ENCODE measurements at regions of chr1 and their contacts with region 1.

Region 1: DNA sequence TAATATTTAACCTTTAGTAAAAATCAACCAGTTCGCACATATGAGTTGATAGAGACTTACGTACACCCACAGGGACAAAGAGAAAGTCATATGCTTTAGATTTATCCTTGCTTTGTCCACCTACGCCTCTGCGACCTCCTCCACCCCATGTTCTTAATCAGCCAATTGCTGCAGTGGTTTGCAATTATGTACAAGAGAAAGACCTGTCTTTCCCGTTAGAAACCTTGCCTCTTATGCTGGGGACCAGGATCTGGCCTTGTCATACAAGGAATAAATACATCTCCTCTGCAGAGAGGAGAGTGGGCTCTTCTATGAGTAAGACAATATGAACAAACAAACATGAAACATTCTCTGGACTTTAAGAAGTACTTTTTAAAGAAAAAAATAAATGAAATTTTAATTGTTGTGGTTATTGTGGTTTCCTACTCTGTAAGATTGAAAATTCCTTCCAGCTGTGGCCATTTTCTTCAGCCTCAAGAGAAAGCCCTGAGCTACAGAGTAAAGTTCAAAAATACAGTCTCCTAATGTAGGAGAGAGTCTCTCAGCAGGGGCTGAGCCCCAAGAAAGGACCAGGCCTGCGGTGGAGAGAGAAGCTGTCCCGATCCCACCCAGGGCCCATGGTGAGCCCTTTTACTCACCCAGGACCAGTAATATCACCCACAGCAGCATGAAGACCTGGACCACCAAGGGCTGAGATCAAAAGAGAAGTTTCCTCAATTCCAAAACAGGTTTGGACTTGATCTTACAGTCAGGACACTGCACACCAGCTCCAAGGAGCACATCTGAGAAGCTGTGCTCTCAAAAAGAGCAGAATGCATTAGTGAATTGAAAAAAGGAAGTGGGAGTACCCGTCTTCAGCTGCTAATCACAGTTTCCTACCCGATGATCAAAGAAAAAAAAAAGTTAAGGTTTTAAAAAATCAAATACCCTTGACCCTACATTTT is at the start of gene FCRL5:
- DNase-seq: peak; percentile 77
- H3K4me3 ChIP-seq: peak within 1 kb of the TSS; percentile 74
- H3K27ac ChIP-seq: peak within 1 kb of the TSS; percentile 86
- H3K4me1 ChIP-seq: peaks cover 38% of the 10 kb centered on the region
- CTCF ChIP-seq: no peak
- total RNA-seq, gene FCRL5: 64.6 and 73.5 TPM in 2 replicates

Region 2: GRCh38 chr1:157415661-157416060 is 136.3 kb before region 1 on chr1:
- CTCF ChIA-PET with region 1: no interaction called
- POLR2A ChIA-PET with region 1: no interaction called
- intact Hi-C with region 1: no loop called
- DNase-seq: no peak
- H3K4me3 ChIP-seq: no peak overlapping the region
- H3K27ac ChIP-seq: no peak overlapping the region
- H3K4me1 ChIP-seq: no peaks in the 10 kb centered on the region
- CTCF ChIP-seq: no peak

Region 3: DNA sequence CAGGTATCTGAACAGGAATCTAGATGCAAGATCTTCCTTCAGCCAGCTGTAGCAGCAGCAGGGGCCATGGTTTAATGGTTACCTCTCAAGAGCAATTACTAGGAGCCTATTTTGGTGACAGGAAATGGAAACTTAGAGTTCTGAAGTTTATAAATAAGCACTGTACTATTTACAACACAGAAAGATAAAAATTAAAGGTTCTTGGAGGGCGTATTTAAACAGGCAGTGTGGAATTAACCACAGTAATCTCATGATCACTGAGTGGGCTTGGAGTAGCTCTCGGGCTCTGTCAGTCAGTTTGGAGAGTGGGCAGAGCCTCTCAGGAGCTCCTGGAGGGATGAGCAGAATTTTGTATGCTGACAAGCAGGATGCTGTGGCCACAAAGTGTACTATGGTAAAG is 10.5 kb after region 1 on chr1:
- CTCF ChIA-PET with region 1: interaction called, 3 read pairs
- POLR2A ChIA-PET with region 1: interaction called, 22 read pairs
- intact Hi-C with region 1: loop called (anchors 1 kb)
- DNase-seq: peak; percentile 90
- H3K4me3 ChIP-seq: peak overlapping the region; percentile 12
- H3K27ac ChIP-seq: peak overlapping the region; percentile 64
- H3K4me1 ChIP-seq: peaks cover 72% of the 10 kb centered on the region
- CTCF ChIP-seq: no peak

Region 4: DNA sequence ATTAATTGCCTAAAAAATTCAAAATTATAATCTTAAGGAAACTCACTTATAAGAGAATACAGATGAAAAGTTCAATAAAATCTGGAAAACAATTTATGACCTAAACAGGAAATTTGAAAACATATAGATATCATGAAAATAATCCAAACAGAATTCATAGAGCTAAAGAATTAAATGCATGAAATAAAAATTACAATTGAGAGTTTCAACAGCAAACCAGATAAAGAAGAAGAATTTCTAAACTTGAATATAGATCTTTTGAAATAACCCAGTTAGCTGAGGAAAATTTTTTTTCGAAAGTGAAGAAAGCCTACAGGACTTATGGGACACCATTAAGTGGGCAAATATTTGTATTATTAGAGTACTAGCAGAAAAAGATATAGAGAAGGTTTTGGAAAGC is 261.3 kb after region 1 on chr1:
- CTCF ChIA-PET with region 1: no interaction called
- POLR2A ChIA-PET with region 1: no interaction called
- intact Hi-C with region 1: no loop called
- DNase-seq: peak; percentile 42
- H3K4me3 ChIP-seq: no peak overlapping the region
- H3K27ac ChIP-seq: no peak overlapping the region
- H3K4me1 ChIP-seq: peaks cover 75% of the 10 kb centered on the region
- CTCF ChIP-seq: no peak

Measured in OCI-LY7 (cell line).